ENCODE measurements at regions of chr10 and their contacts with region 1.

Region 1: DNA sequence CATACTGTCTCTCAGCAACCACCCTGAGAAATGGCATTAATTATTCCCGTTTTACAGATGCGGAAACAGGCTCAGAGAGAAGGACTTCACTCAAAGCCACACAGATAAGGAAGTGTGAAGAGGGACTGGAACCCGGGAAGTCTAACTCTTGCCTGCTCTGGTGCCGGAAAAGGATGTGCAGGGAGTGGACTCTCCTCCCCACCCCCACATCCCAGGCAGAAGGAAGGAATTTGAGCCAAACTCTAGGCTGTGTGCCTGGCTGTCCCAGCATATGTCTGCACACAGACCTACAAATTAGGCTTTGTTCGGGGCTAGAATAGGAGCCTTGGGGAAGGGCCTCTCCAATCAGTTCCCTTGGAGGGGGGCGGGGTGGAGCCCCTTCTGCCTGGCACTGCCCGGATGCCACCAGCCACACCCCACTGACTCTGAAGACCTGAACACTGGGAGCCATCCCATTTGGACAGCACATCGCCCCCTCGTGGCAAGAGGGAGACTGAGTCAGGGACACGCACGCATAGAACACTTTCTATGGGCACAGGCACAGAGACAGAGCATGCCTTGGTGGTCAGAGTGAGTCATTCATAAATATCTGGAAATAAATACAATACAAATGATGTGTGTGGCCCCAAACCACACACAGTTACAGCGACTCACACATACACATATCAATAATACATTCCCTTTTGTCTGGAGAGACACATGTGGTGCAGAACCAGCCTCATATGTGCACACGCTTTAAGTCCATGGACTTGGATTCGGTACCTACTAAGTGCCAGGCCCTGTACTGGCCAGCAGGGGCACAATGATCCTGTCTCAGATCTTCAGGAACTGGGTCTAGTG is 13.1 kb downstream of the LZTS2 start:
- DNase-seq: peak; percentile 62 to 87 (median 75)
- H3K4me3 ChIP-seq: no peak overlapping the region
- H3K4me3 Mint-ChIP-seq: peak overlapping the region in 1 of 2 donors; percentile 24
- H3K27ac ChIP-seq: no peak overlapping the region
- H3K27ac Mint-ChIP-seq: peak overlapping the region in 4 of 7 donors; percentile 1 to 75 (median 25)
- H3K4me1 ChIP-seq: peaks cover 6 to 8% of the 10 kb centered on the region in 2 donors
- H3K4me1 Mint-ChIP-seq: peaks cover 19% of the 10 kb centered on the region
- H3K27me3 ChIP-seq: peaks cover 0 to under 1% of the 10 kb centered on the region in 2 donors
- H3K27me3 Mint-ChIP-seq: peaks cover 12 to 28% (median 20%) of the 10 kb centered on the region in 3 donors
- CTCF ChIP-seq: peak; percentile 80

Region 2: GRCh38 chr10:100969187-100970075 is 43.3 kb before region 1 on chr10 and contains the start of gene SEMA4G:
- intact Hi-C with region 1: loop called in 1 of 2 experiments (anchors 5 kb)
- DNase-seq: peak; percentile 4 to 36 (median 15)
- H3K4me3 ChIP-seq: peak within 1 kb of the TSS; percentile 6 to 70 (median 31)
- H3K4me3 Mint-ChIP-seq: peak within 1 kb of the TSS; percentile 71 to 84
- H3K27ac ChIP-seq: no peak within 1 kb of the TSS
- H3K27ac Mint-ChIP-seq: peak within 1 kb of the TSS in 2 of 7 donors; percentile 21 to 33
- H3K4me1 ChIP-seq: peaks cover 11 to 13% of the 10 kb centered on the region in 2 donors
- H3K4me1 Mint-ChIP-seq: peaks cover 13% of the 10 kb centered on the region
- H3K27me3 ChIP-seq: peaks cover 7 to 13% of the 10 kb centered on the region in 2 donors
- H3K27me3 Mint-ChIP-seq: peaks cover 18 to 26% (median 22%) of the 10 kb centered on the region in 3 donors
- CTCF ChIP-seq: peak; percentile 72
- polyA plus RNA-seq, gene SEMA4G: 0.24 TPM in 1 of 3 donors, not detected in the others

Measured in CD14-positive monocyte (primary cell).